Dendritic cell treated with granulocyte-macrophage colony-stimulating factor and Interleukin-4, amounts not matched to agents 40 ng/mL and 50 ng/mL, for 4 days (primary cell): ENCODE measurements at regions of chr22 and their contacts with region 1.

Region 1: DNA sequence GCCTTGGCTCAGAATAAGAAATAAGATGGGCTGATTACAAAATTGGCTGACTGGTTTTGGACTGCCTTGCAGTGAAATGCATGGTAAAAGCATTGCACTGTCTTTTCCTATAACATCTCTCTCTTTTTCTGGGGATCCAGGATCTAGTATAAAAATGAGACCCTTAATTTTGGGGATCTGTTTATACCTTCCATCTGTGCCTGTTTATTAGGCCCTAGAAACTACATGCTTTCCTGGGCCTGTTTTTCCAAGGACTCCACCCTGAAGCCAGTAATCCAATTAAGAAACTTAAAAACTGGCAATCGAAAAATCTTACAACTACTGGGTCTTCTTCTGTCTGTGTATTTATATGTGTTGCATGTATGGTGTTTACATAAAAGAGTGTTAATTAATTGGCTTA is 14.5 kb downstream of the HORMAD2 start:
- H3K4me3 Mint-ChIP-seq: no peak overlapping the region
- H3K27ac Mint-ChIP-seq: no peak overlapping the region
- H3K4me1 Mint-ChIP-seq: no peaks in the 10 kb centered on the region
- H3K27me3 Mint-ChIP-seq: no peaks in the 10 kb centered on the region

Region 2: GRCh38 chr22:30127749-30128166 is 33.0 kb after region 1 on chr22:
- intact Hi-C with region 1: no loop called
- H3K4me3 Mint-ChIP-seq: no peak overlapping the region
- H3K27ac Mint-ChIP-seq: no peak overlapping the region
- H3K4me1 Mint-ChIP-seq: peaks cover 7% of the 10 kb centered on the region
- H3K27me3 Mint-ChIP-seq: no peaks in the 10 kb centered on the region

Region 3: DNA sequence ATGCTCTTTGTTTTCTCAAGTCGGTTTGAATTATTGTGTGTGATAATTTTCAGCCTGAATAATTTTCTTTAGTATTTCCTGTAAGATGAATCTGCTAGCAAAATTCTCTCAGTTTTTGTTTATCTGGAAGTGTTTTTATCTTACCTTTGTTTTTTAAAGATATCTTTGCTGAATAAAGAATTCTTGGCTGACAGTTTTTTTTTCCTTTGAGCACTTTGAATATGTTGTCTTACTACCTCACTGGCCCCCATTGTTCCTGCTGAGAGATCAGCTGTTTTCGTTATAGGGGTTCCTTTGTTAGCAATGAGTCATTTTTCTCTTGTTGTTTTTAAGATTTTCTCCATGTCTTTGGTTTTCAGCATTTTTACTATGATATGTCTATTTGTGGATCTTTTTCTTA is 48.5 kb after region 1 on chr22:
- intact Hi-C with region 1: loop called (anchors 10 kb)
- H3K4me3 Mint-ChIP-seq: no peak overlapping the region
- H3K27ac Mint-ChIP-seq: no peak overlapping the region
- H3K4me1 Mint-ChIP-seq: no peaks in the 10 kb centered on the region
- H3K27me3 Mint-ChIP-seq: peaks cover 20% of the 10 kb centered on the region

Region 4: GRCh38 chr22:30183861-30184278 is 89.1 kb after region 1 on chr22:
- intact Hi-C with region 1: loop called (anchors 10 kb)
- H3K4me3 Mint-ChIP-seq: no peak overlapping the region
- H3K27ac Mint-ChIP-seq: no peak overlapping the region
- H3K4me1 Mint-ChIP-seq: no peaks in the 10 kb centered on the region
- H3K27me3 Mint-ChIP-seq: peaks cover 5% of the 10 kb centered on the region